H1 (cell line): ENCODE measurements at regions of chr6 and their contacts with region 1.

Region 1: DNA sequence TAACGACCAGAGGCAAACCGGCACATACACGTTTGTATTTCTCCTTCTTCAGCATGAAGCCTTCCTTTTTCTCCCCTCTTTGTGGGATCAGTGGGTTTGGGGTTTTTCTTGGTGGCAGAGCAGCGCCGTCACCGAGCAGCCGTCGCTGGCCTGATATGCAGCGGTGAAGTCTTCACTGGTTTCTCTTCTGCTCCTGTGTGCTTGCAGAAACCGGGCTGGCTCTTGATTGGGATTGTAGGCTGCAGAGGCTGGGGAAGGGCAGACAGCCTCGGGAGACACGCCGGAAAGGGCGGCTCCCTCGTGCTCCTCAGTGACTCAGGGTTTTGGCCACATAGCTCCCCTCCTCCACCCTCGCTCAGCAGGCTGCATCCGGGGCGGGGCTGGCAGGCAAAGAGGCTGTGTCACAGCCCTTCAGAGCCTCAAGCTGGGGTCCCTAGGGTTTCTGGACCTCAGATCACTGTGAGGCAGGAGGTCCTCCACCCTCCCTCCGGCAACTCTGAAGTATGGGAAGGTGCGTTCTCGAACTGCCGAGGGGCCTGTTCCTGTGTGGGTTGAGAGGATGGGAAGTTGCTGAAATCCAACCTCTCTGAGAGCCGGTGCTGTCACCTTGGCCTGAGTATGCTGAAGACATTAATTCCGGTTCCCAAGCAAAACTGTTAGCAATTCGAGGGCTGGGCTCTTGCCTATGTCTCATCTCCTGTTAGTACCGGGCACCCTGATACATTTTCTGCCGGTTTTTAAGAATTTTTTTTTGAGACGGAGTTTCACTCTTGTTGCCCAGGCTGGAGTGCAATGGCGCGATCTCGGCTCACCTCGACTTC is 24.2 kb downstream of the NQO2 start:
- DNase-seq: peak; percentile 75 to 86
- H3K4me3 ChIP-seq: peak overlapping the region in 2 of 4 experiments; percentile 5 to 9; a peak in 1 of 8 replicates
- H3K27ac ChIP-seq: peak overlapping the region; percentile 29; the same call in 1 of the 2 replicates
- H3K4me1 ChIP-seq: peaks cover 6 to 17% (median 11%) of the 10 kb centered on the region in 4 experiments
- H3K27me3 ChIP-seq: no peaks in the 10 kb centered on the region
- CTCF ChIP-seq: no peak
- EP300 ChIP-seq: peak in 1 of 2 experiments; percentile 80; a peak in 1 of 3 replicates
- POLR2A ChIP-seq: no peak
- RAD21 ChIP-seq: no peak

Region 2: DNA sequence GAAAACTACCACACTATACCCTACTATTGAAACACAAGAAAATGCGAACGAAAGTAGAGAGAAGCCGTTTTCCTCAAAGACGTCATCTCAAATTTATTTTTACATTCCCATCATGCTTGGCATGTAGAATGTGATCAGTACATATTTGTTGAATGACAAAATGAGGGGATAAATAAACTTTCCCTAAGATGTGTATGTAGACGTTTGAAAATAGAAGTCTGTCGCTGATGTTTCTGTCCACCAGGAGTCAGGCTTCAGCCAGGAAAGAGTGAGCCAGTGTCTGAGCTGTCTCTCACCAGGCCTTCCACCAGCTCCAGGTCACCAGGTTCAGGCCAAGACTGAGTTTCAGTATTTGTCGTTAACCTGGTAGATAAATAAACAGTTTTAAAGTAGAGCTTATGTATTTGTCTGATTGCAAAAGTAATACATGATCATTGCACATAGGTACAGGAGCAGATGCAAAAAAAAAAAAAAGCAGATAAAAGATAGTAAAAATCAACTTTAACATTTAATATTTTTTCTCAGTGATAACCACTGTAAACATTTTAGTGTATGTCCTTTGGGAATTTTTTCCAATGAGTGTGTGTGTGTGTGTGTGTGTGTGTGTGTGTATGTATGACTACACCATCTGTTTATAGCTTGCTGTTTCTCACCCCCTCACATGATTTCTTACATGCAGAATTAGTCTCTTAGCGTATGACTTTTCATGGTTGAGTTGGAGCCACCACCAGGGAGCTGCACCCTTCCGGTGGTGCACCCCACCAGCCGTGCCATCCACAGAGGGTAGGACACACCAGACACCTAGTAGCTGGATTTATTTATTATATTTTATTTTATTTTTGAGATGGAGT is 232.5 kb before region 1 on chr6:
- CTCF ChIA-PET with region 1: no interaction called
- POLR2A ChIA-PET with region 1: no interaction called
- DNase-seq: no peak
- H3K4me3 ChIP-seq: no peak overlapping the region
- H3K27ac ChIP-seq: no peak overlapping the region
- H3K4me1 ChIP-seq: no peaks in the 10 kb centered on the region; a peak in 1 of 7 replicates
- H3K27me3 ChIP-seq: no peaks in the 10 kb centered on the region
- CTCF ChIP-seq: peak; percentile 64 to 89 (median 88)
- EP300 ChIP-seq: no peak
- POLR2A ChIP-seq: no peak
- RAD21 ChIP-seq: peak; percentile 90 to 95

Region 3: GRCh38 chr6:2900821-2901644 is 122.8 kb before region 1 on chr6:
- CTCF ChIA-PET with region 1: no interaction called
- POLR2A ChIA-PET with region 1: no interaction called
- DNase-seq: no peak
- H3K4me3 ChIP-seq: peak overlapping the region; percentile 1 to 80 (median 41); a peak in 5 of 8 replicates
- H3K27ac ChIP-seq: no peak overlapping the region
- H3K4me1 ChIP-seq: peaks cover 3 to 23% (median 4%) of the 10 kb centered on the region in 4 experiments; a peak in 6 of 7 replicates
- H3K27me3 ChIP-seq: peaks cover 0 to 2% (median 0%) of the 10 kb centered on the region in 4 experiments; a peak in 2 of 7 replicates
- CTCF ChIP-seq: no peak
- EP300 ChIP-seq: no peak
- POLR2A ChIP-seq: no peak
- RAD21 ChIP-seq: no peak

Region 4: GRCh38 chr6:3013479-3013878 is 10.4 kb before region 1 on chr6:
- CTCF ChIA-PET with region 1: interaction called, 4 read pairs
- POLR2A ChIA-PET with region 1: interaction called, 24 read pairs
- DNase-seq: no peak
- H3K4me3 ChIP-seq: no peak overlapping the region
- H3K27ac ChIP-seq: no peak overlapping the region
- H3K4me1 ChIP-seq: peaks cover 0 to 5% (median 4%) of the 10 kb centered on the region in 4 experiments; a peak in 3 of 7 replicates
- H3K27me3 ChIP-seq: no peaks in the 10 kb centered on the region
- CTCF ChIP-seq: no peak
- EP300 ChIP-seq: no peak
- POLR2A ChIP-seq: no peak
- RAD21 ChIP-seq: no peak

Region 5: DNA sequence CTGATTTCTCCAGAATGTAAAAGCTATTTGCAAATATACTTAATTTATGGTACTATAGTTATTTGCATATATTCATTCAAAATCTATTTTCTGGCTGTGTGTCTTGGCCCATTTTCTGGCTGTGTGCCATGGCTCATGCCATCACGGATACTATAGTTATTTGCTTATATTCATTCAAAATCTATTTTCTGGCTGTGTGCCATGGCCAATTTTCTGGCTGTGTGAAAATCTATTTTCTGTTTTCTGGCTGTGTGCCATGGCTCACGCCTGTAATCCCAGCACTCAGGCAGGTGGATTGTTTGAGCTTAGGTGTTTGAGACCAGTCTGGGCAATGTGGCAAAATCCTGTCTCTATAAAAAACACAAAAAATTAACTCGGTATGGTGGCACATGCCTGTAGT is 15.5 kb after region 1 on chr6:
- CTCF ChIA-PET with region 1: interaction called, 9 read pairs
- POLR2A ChIA-PET with region 1: interaction called, 16 read pairs
- DNase-seq: no peak
- H3K4me3 ChIP-seq: no peak overlapping the region
- H3K27ac ChIP-seq: no peak overlapping the region
- H3K4me1 ChIP-seq: peaks cover 0 to 5% (median 1%) of the 10 kb centered on the region in 4 experiments; a peak in 1 of 7 replicates
- H3K27me3 ChIP-seq: no peaks in the 10 kb centered on the region
- CTCF ChIP-seq: no peak
- EP300 ChIP-seq: no peak
- POLR2A ChIP-seq: no peak
- RAD21 ChIP-seq: no peak